Right cardiac atrium (tissue), 5 donors: ENCODE measurements at regions of chr6 and their contacts with region 1.

Region 1: GRCh38 chr6:2622671-2623070 is 128.1 kb downstream of the MYLK4 start:
- DNase-seq: peak; percentile 50 to 74 (median 72)
- ATAC-seq: peak; percentile 63 to 70
- H3K4me3 ChIP-seq: no peak overlapping the region
- H3K27ac ChIP-seq: no peak overlapping the region
- H3K4me1 ChIP-seq: no peaks in the 10 kb centered on the region
- H3K27me3 ChIP-seq: no peaks in the 10 kb centered on the region

Region 2: DNA sequence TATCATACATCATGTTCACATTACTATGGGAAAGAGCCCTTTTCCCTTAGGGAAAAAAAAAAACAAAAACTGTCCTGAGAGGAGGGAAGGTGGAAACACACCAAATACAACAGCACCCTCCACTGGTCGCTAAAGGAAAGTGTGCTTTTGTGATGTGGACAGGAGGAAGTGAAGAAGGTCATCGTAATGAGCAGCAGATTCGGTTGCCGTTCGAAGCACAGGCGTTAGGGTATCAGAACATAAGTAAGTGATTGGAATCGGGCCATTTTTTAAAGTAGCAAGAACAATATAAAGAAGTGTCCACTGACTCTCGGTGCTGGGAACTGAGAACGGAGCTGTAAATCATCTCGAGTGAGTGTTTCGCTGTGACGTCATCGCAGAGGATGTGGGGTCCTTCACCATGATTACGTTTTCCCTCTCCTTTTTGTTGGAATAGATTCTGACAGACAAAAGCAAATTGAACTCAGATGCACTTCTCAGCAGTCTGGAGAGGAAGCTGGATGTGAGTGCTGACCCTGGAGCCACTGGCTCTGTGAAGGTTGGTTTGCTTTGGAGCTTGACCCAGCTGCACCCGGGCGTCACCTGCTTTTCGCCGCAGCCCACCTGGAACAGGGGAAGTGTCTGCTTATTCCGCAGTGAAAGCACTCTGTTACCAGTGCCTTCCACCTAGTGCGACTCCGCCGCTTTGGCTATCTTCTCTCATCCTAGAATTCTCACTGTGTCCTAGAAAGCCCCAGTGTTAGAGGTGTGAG is 173.7 kb before region 1 on chr6:
- intact Hi-C with region 1: loop called in 1 of 4 experiments (anchors 10 kb)
- DNase-seq: peak in 1 of 3 donors; percentile 49
- ATAC-seq: peak; percentile 69 to 83
- H3K4me3 ChIP-seq: peak overlapping the region; percentile 27
- H3K27ac ChIP-seq: no peak overlapping the region
- H3K4me1 ChIP-seq: peaks cover 4% of the 10 kb centered on the region
- H3K27me3 ChIP-seq: no peaks in the 10 kb centered on the region